Sigmoid colon (tissue), 7 donors: ENCODE measurements at regions of chr12 and their contacts with region 1.

Region 1: DNA sequence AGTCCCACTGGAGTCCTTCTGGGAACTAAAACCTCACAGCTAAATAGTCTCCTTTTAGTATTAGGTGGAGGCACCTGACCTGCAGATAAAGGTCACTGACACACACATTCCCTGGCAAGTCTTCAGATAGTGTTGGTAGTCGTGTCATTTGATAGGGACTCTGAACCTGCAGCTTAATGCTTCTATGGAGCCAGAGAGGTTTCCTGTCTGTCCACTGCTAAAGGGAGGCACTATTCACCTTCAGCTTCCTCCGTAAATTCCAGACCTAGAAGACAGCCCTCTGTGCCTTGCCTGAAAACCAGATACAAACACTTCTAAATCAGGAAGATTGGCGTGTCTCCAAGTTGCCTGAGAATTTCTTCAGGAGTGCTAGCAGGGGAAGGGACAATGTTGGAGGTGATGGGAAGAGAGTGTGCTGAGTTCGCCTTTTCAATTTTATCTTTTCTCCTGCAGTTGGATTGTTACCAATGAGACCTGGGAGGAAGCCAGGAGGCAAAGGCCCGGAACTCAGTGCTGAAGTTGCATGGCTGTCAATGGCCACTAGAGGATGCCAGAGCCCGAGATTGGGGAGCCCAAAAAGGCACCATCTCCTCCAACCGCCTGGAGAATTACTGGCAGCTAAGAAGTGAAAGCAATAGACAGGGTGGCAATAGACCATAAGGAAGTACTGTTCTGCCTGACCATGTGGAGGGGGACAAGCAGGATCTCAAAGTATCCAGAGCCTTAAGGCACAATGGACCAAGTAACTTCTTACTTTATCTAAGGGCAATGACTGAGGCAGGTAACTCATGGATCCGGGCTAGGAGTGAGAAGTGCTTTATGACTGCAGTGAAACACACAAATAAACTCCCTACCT is 81.6 kb upstream of the SCAF11 start:
- DNase-seq: peak; percentile 82
- H3K4me3 ChIP-seq: no peak overlapping the region
- H3K27ac ChIP-seq: peak overlapping the region in 3 of 4 donors; percentile 19 to 45 (median 41)
- H3K4me1 ChIP-seq: peaks cover 0 to 12% (median 10%) of the 10 kb centered on the region in 4 donors
- H3K27me3 ChIP-seq: no peaks in the 10 kb centered on the region
- CTCF ChIP-seq: peak; percentile 92 to 98 (median 94)
- EP300 ChIP-seq: no peak
- POLR2A ChIP-seq: no peak

Region 2: DNA sequence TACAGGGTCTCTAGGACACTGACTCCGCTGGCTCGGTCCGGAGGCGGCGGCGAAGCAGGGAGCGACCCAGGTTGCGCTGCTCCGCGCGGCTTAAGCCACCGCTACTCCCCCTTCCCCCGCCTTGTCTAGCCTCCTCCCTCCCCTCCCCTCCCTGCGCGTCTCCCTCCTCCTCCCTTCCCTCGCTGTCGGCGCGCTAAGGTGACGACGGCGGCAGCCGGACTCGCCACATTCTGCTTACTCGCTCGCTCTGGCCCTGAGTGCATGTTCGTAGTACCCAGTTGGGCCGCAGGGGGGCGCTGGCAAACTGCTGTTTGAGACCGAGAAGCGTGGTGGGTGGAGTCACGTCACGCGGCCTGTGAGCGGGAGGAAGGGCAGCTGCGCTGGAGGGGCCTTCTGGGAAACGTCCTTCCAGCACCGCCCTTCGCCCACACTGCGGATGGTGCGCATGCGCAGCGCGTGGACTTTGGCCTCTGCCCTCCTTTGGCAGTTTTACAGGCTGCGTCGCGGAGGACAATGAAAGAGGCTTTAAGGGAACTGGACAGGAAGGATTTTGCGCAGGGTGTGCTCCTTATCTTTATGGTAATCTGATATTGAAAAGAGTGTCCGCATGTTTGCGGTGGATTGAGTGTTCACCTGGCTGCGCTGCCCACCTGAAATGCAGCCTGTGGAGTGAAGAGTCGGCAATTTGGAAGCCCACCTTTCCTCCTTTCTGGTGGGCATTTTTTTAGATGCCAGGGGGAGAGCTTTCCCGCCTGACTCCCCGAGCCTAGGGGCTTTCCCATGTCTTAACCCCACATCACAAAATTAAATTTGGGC is 81.3 kb before region 1 on chr12 and contains the start of gene SCAF11:
- intact Hi-C with region 1: loop called (anchors 5 kb)
- DNase-seq: peak; percentile 100
- H3K4me3 ChIP-seq: peak within 1 kb of the TSS; percentile 71 to 92 (median 82)
- H3K27ac ChIP-seq: peak within 1 kb of the TSS; percentile 96 to 99 (median 98)
- H3K4me1 ChIP-seq: peaks cover 0 to 45% (median 36%) of the 10 kb centered on the region in 4 donors
- H3K27me3 ChIP-seq: no peaks in the 10 kb centered on the region
- CTCF ChIP-seq: peak; percentile 89 to 99 (median 96)
- EP300 ChIP-seq: peak in 2 of 4 donors; percentile 22 to 80
- POLR2A ChIP-seq: peak; percentile 90 to 95
- total RNA-seq, gene SCAF11: 116 to 165 (median 127) TPM

Region 3: DNA sequence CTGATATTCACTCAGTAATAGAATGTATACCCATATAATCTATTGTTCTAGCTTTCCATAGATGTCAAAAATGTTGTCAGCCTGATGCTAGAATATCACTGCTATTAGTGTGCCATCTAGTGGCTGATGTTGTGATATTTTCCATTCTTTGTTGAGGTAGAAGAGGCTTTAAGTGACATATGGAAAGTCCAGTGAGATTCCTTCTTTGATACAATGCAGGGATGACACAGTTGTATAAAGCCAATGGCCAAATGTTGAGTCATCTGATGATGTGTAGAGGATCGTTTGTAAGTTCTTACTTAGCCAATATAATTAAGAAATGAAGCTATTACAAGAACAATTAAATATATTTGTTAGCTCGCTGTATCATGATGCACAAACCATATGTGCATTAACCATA is 949.3 kb after region 1 on chr12:
- intact Hi-C with region 1: loop called (anchors 5 kb)
- DNase-seq: no peak
- H3K4me3 ChIP-seq: no peak overlapping the region
- H3K27ac ChIP-seq: no peak overlapping the region
- H3K4me1 ChIP-seq: peaks cover 0 to 7% (median 0%) of the 10 kb centered on the region in 4 donors
- H3K27me3 ChIP-seq: no peaks in the 10 kb centered on the region
- CTCF ChIP-seq: peak; percentile 51 to 72 (median 66)
- EP300 ChIP-seq: no peak
- POLR2A ChIP-seq: no peak